ENCODE measurements at regions of chr16 and their contacts with region 1.

Region 1: GRCh38 chr16:81204798-81205680 is 33.5 kb upstream of the BCO1 start:
- DNase-seq: peak; percentile 36
- H3K4me3 ChIP-seq: no peak overlapping the region
- H3K27ac ChIP-seq: no peak overlapping the region
- H3K4me1 ChIP-seq: no peaks in the 10 kb centered on the region
- H3K27me3 ChIP-seq: peaks cover 3% of the 10 kb centered on the region
- CTCF ChIP-seq: peak; percentile 61 to 73

Region 2: GRCh38 chr16:81181013-81181720 is 23.9 kb before region 1 on chr16:
- CTCF ChIA-PET with region 1: no interaction called
- dilution Hi-C with region 1: no loop called
- in situ Hi-C with region 1: no loop called
- intact Hi-C with region 1: no loop called
- DNase-seq: peak; percentile 95
- H3K4me3 ChIP-seq: no peak overlapping the region
- H3K27ac ChIP-seq: peak overlapping the region; percentile 40
- H3K4me1 ChIP-seq: peaks cover 8% of the 10 kb centered on the region
- H3K27me3 ChIP-seq: no peaks in the 10 kb centered on the region
- CTCF ChIP-seq: no peak

Region 3: GRCh38 chr16:81251871-81252270 is 46.8 kb after region 1 on chr16:
- CTCF ChIA-PET with region 1: no interaction called
- dilution Hi-C with region 1: no loop called
- in situ Hi-C with region 1: no loop called
- intact Hi-C with region 1: no loop called
- DNase-seq: no peak
- H3K4me3 ChIP-seq: no peak overlapping the region
- H3K27ac ChIP-seq: no peak overlapping the region
- H3K4me1 ChIP-seq: no peaks in the 10 kb centered on the region
- H3K27me3 ChIP-seq: no peaks in the 10 kb centered on the region
- CTCF ChIP-seq: no peak

Region 4: GRCh38 chr16:81349996-81350618 is 145.1 kb after region 1 on chr16:
- CTCF ChIA-PET with region 1: interaction called, 28 read pairs
- dilution Hi-C with region 1: no loop called
- in situ Hi-C with region 1: no loop called
- intact Hi-C with region 1: loop called (anchors 10 kb)
- DNase-seq: no peak
- H3K4me3 ChIP-seq: no peak overlapping the region
- H3K27ac ChIP-seq: no peak overlapping the region
- H3K4me1 ChIP-seq: no peaks in the 10 kb centered on the region
- H3K27me3 ChIP-seq: no peaks in the 10 kb centered on the region
- CTCF ChIP-seq: peak in 1 of 2 donors; percentile 45

Region 5: DNA sequence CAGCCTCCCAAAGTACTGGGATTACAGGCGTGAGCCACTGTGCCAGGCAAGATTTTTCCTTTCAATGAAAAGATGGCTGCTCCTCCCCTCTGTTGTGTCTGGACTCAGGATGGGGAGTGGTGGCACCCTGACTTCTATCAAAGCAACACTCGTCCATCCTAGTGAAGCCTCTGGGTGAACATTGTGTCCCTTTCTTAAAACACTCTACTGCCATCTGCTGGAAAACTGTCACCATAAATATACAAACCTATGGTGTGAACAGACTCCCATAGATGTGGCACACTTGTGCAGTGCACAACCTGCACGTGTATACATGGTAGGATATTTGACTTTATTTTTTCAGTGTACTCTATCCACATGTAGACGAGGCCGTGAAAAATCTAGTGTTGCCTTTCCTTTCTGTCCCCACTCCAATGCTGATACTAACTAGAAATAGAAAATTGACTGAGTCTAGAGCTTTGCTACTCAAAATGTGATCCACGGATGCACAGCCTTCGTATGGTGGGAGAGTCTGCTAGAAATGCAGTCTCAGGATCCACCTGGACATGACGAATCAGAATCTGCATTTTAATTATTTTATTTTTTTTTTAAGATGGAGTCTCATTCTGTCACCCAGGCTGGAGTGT is 518.2 kb after region 1 on chr16:
- CTCF ChIA-PET with region 1: no interaction called
- dilution Hi-C with region 1: no loop called
- in situ Hi-C with region 1: no loop called
- intact Hi-C with region 1: loop called (anchors 1 kb)
- DNase-seq: peak; percentile 73
- H3K4me3 ChIP-seq: no peak overlapping the region
- H3K27ac ChIP-seq: no peak overlapping the region
- H3K4me1 ChIP-seq: peaks cover 8% of the 10 kb centered on the region
- H3K27me3 ChIP-seq: no peaks in the 10 kb centered on the region
- CTCF ChIP-seq: peak; percentile 50 to 66

Region 6: DNA sequence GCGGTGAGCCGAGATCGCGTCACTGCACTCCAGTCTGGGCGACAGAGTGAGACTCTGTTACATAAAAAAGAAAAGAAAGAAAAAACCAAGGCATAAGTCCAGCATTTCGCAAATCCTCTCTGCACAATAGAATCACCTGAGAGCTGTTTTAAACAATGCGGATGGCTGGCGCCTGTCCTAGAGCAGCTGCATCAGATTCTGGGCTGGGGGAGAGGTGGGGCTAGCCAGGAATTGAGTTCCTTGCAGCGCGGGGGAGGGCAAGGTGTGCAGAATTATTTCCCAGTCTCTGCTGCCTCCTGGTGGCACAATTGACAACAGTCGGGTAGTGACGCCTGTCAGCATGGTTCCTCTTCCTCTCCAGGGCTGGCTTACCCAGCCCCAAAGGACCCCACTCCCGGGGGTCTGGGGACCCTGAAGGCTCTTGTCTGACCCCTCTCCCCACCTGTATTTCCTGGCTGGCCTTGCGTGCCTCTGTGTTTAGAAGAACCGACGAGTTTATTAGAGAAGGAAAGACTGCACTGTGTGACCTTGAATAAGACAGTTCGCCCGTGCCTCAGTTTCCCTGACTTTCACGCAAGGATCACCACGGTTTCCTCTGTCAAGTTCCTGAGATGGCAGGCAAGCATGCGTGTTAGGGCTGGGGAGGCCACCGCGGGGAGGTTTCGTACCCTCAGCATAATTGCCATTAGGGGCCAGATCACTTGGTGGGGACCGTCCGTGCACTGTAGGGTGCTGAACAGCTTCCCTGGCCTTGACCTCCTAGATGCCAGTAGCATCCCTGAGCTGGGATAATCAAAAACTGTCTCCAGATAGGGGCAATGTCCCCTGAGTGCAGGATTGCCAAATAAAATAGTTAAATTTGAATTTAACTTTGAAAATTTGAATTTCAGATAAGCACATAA is 533.1 kb after region 1 on chr16:
- CTCF ChIA-PET with region 1: no interaction called
- dilution Hi-C with region 1: no loop called
- in situ Hi-C with region 1: no loop called
- intact Hi-C with region 1: loop called (anchors 1 kb)
- DNase-seq: peak; percentile 88
- H3K4me3 ChIP-seq: peak overlapping the region in 1 of 3 experiments; percentile 18
- H3K27ac ChIP-seq: no peak overlapping the region
- H3K4me1 ChIP-seq: peaks cover 3% of the 10 kb centered on the region
- H3K27me3 ChIP-seq: no peaks in the 10 kb centered on the region
- CTCF ChIP-seq: peak; percentile 81 to 83

Measured in mammary epithelial cell (primary cell).